PC-9 (cell line): ENCODE measurements at regions of chr22 and their contacts with region 1.

Region 1: GRCh38 chr22:38766076-38766777 is 10.4 kb upstream of the SUN2 start:
- DNase-seq: peak; percentile 79 to 89
- H3K4me3 ChIP-seq: no peak overlapping the region
- H3K27ac ChIP-seq: no peak overlapping the region
- H3K4me1 ChIP-seq: peaks cover 26% of the 10 kb centered on the region
- H3K27me3 ChIP-seq: no peaks in the 10 kb centered on the region
- CTCF ChIP-seq: peak; percentile 98

Region 2: DNA sequence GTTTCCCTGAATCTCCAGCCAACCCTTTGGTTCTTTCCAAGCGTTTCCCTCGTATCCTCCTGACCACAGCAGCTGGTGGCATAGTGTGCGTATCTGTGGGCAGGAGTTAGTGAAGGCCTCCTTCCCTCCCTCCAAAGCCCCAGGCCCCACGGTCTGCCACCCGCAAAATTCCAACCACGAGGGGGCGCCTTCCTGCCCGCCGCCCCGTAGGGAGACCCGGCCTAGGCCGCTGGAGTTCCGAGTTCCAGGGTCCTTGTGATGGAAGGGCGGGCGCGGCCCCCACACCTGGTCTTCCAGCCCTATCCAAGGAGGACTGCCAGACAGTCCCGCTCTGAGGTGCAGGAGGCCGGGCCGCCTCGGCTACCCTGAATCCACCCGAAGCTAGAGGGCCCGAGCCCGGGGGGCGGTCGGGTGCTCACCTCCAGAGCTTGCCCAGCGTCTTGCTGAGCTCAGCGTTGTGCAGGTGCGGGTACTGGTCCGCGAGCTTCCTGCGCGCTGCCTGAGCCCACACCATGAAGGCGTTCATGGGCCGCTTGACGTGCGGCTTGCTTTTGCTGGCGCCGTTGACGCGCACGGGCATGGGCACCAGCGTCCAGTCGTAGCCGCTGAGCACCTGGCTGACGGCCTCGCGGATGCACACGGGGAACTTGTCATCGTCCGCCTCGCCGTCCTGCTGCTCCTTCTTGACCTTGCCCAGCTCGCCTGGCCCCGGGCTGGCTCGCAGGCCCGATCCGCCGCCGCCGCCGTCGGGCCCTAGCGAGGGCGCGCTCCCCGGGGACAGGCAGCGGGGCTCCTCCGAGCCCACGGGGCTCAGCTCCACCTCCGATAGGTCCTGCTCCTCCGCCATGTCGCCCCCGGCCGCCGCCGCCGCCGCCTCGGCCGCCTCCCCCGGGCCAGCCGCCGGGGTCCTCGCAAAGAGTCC is 783.0 kb before region 1 on chr22:
- CTCF ChIA-PET with region 1: no interaction called
- POLR2A ChIA-PET with region 1: no interaction called
- intact Hi-C with region 1: no loop called
- DNase-seq: no peak
- H3K4me3 ChIP-seq: no peak overlapping the region
- H3K27ac ChIP-seq: no peak overlapping the region
- H3K4me1 ChIP-seq: no peaks in the 10 kb centered on the region
- H3K27me3 ChIP-seq: no peaks in the 10 kb centered on the region
- CTCF ChIP-seq: no peak

Region 3: DNA sequence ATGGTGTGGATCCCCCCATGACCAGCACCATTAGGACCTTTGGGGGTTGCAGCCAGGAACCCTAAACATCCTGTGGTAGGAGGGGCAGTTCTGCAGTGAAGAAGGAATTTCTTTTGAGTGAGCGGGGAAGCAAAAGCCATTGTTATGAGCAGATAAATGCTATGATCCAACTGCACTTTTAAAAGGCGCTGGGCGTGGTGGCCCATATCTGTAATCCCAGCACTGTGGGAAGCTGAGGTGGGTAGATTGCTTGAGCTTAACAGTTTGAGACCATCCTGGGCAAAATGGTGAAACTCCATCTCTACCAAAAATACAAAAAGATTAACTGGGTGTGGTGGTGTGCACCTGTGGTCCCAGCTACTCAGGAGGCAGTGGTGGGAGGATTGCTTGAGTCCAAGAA is 90.4 kb before region 1 on chr22:
- CTCF ChIA-PET with region 1: no interaction called
- POLR2A ChIA-PET with region 1: no interaction called
- intact Hi-C with region 1: no loop called
- DNase-seq: no peak
- H3K4me3 ChIP-seq: no peak overlapping the region
- H3K27ac ChIP-seq: no peak overlapping the region
- H3K4me1 ChIP-seq: no peaks in the 10 kb centered on the region
- H3K27me3 ChIP-seq: no peaks in the 10 kb centered on the region
- CTCF ChIP-seq: no peak

Region 4: GRCh38 chr22:38724926-38725571 is 41.2 kb before region 1 on chr22:
- CTCF ChIA-PET with region 1: no interaction called
- POLR2A ChIA-PET with region 1: no interaction called
- intact Hi-C with region 1: loop called (anchors 2 kb)
- DNase-seq: no peak
- H3K4me3 ChIP-seq: no peak overlapping the region
- H3K27ac ChIP-seq: no peak overlapping the region
- H3K4me1 ChIP-seq: no peaks in the 10 kb centered on the region
- H3K27me3 ChIP-seq: no peaks in the 10 kb centered on the region
- CTCF ChIP-seq: peak; percentile 79

Region 5: GRCh38 chr22:38755911-38756532 is 10.2 kb before region 1 on chr22 and contains the start of gene SUN2:
- CTCF ChIA-PET with region 1: interaction called, 20 read pairs
- POLR2A ChIA-PET with region 1: interaction called, 6 read pairs
- intact Hi-C with region 1: no loop called
- DNase-seq: peak; percentile 71 to 90
- H3K4me3 ChIP-seq: peak within 1 kb of the TSS; percentile 89
- H3K27ac ChIP-seq: peak within 1 kb of the TSS; percentile 87
- H3K4me1 ChIP-seq: peaks cover 55% of the 10 kb centered on the region
- H3K27me3 ChIP-seq: no peaks in the 10 kb centered on the region
- CTCF ChIP-seq: no peak
- total RNA-seq, gene SUN2: 169 and 220 TPM in 2 replicates

Region 6: GRCh38 chr22:38843201-38843715 is 77.0 kb after region 1 on chr22:
- CTCF ChIA-PET with region 1: interaction called, 10 read pairs
- POLR2A ChIA-PET with region 1: interaction called, 4 read pairs
- intact Hi-C with region 1: loop called (anchors 5 kb)
- DNase-seq: peak; percentile 62 to 64
- H3K4me3 ChIP-seq: peak overlapping the region; percentile 67; the same call in 1 of the 2 replicates
- H3K27ac ChIP-seq: no peak overlapping the region
- H3K4me1 ChIP-seq: peaks cover 24% of the 10 kb centered on the region
- H3K27me3 ChIP-seq: no peaks in the 10 kb centered on the region; the same call in 1 of the 2 replicates
- CTCF ChIP-seq: no peak; the same call in 1 of the 2 replicates

Region 7: DNA sequence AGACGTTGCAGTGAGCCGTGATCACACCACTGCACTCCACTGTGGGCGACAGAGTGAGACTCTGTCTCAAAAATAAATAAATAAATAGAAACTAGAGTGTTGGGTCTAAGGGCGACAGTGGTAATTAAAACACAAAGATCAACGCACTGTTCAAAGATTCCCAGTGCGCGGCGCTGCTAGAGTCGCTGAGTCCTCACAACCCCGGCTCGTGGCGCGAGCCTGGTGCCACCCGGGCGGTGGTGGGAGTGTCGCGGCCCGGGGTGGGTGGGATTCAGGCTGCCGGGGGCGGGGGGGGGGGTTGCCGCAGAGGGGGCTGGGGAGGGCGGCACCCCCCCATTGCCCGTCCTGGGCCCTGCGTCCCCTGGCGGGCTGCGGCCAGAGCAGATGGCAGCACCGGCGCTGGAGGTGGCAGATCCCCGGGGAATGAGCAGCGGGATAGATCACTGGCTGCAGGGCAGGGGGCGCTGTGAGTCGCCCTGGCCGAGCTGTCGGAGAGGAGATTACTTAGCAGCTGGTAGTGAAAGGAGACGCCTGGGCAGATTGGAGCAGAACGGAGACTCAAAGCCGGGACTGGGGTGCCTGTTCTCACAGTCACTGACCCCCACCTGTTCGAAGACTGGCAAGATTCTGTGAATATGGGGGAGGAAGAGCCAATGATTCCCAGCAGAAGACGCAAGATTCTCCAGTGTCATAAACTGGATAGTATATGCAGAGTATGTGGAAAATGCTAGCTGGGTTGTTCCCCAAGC is 161.0 kb after region 1 on chr22:
- CTCF ChIA-PET with region 1: interaction called, 3 read pairs
- POLR2A ChIA-PET with region 1: no interaction called
- intact Hi-C with region 1: loop called (anchors 5 kb)
- DNase-seq: peak in 1 of 2 experiments; percentile 89
- H3K4me3 ChIP-seq: no peak overlapping the region
- H3K27ac ChIP-seq: no peak overlapping the region
- H3K4me1 ChIP-seq: peaks cover 39% of the 10 kb centered on the region
- H3K27me3 ChIP-seq: no peaks in the 10 kb centered on the region
- CTCF ChIP-seq: peak; percentile 50

Region 8: GRCh38 chr22:39123751-39124601 is 357.7 kb after region 1 on chr22:
- CTCF ChIA-PET with region 1: interaction called, 4 read pairs
- POLR2A ChIA-PET with region 1: no interaction called
- intact Hi-C with region 1: loop called (anchors 5 kb)
- DNase-seq: no peak
- H3K4me3 ChIP-seq: no peak overlapping the region
- H3K27ac ChIP-seq: no peak overlapping the region
- H3K4me1 ChIP-seq: peaks cover 9% of the 10 kb centered on the region; the same call in 1 of the 2 replicates
- H3K27me3 ChIP-seq: no peaks in the 10 kb centered on the region
- CTCF ChIP-seq: no peak

Region 9: GRCh38 chr22:40044102-40044869 is 1278.1 kb after region 1 on chr22:
- CTCF ChIA-PET with region 1: interaction called, 3 read pairs
- POLR2A ChIA-PET with region 1: interaction called, 13 read pairs
- intact Hi-C with region 1: no loop called
- DNase-seq: peak; percentile 99
- H3K4me3 ChIP-seq: peak overlapping the region; percentile 65
- H3K27ac ChIP-seq: peak overlapping the region; percentile 46
- H3K4me1 ChIP-seq: peaks cover 29% of the 10 kb centered on the region
- H3K27me3 ChIP-seq: no peaks in the 10 kb centered on the region; the same call in 1 of the 2 replicates
- CTCF ChIP-seq: no peak